WTC11 (cell line): ENCODE measurements at regions of chr1 and their contacts with region 1.

Region 1: GRCh38 chr1:201023517-201023902 is at the start of gene KIF21B:
- DNase-seq: peak; percentile 90
- ATAC-seq: peak; percentile 82
- H3K4me3 Mint-ChIP-seq: peak within 1 kb of the TSS; percentile 79
- H3K27ac Mint-ChIP-seq: no peak within 1 kb of the TSS
- H3K4me1 Mint-ChIP-seq: peaks cover 65% of the 10 kb centered on the region
- H3K27me3 Mint-ChIP-seq: peaks cover 7% of the 10 kb centered on the region
- CTCF ChIP-seq: no peak
- total RNA-seq, gene KIF21B: 17.8 to 19.4 TPM (median 18.0 TPM) in 3 replicates

Region 2: DNA sequence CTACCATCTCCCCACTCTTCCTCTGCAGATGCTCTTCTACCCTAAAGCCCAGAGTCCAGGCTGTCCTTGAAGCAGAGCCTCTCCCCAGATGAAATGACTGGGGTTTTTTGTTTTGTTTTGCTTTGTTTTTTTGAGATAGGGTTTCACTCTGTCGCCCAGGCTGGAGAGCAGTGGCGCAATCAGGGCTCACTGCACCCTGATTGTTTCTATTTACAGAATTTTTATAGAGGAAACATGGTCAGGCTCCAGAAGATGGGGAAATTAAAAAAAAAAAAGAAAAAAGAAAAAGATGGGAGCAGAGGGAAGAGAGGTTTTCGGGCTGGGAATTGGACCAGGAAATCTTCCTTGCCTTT is 570.0 kb before region 1 on chr1:
- CTCF ChIA-PET with region 1: no interaction called
- POLR2A ChIA-PET with region 1: no interaction called
- DNase-seq: no peak
- ATAC-seq: no peak
- H3K4me3 Mint-ChIP-seq: no peak overlapping the region
- H3K27ac Mint-ChIP-seq: peak overlapping the region; percentile 83; the same call in 1 of the 2 replicates
- H3K4me1 Mint-ChIP-seq: peaks cover 31% of the 10 kb centered on the region
- H3K27me3 Mint-ChIP-seq: no peaks in the 10 kb centered on the region
- CTCF ChIP-seq: no peak

Region 3: DNA sequence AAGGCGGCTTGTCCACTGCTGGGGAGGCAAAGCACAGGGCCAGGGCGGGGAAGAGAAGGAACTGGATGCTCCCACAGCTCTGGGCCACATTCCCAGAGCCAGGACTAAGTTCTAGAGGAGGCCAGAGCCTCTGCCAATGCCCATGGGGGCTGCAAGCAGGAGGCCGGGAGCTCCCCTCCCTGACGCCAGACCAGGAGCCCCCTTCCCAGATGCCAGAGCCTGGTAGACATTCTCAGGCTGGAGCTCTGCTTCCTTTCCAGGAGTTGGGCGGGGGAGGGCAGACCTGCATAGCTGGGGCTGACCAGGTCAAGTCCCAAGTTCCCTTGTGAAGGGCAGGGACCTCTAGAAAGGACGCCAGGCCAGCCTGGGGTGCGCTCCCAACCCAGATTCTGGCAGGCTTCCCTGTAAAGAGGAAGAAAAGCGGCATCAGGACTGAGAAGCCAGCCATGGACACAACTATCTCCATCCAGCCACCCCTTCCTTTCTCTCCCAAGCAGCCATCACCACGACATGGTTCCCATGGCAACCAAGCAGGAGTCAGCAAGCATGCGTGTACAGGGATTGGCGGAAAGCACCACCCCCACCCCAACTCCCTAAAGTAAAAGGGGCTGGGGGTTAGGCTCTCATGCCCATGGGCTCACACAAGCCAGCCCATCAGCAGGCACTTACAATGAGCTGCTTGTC is 13.4 kb before region 1 on chr1:
- CTCF ChIA-PET with region 1: interaction called, 54 read pairs
- POLR2A ChIA-PET with region 1: interaction called, 7 read pairs
- DNase-seq: peak; percentile 49
- ATAC-seq: peak; percentile 36
- H3K4me3 Mint-ChIP-seq: no peak overlapping the region
- H3K27ac Mint-ChIP-seq: no peak overlapping the region
- H3K4me1 Mint-ChIP-seq: peaks cover 16% of the 10 kb centered on the region
- H3K27me3 Mint-ChIP-seq: no peaks in the 10 kb centered on the region
- CTCF ChIP-seq: no peak

Region 4: DNA sequence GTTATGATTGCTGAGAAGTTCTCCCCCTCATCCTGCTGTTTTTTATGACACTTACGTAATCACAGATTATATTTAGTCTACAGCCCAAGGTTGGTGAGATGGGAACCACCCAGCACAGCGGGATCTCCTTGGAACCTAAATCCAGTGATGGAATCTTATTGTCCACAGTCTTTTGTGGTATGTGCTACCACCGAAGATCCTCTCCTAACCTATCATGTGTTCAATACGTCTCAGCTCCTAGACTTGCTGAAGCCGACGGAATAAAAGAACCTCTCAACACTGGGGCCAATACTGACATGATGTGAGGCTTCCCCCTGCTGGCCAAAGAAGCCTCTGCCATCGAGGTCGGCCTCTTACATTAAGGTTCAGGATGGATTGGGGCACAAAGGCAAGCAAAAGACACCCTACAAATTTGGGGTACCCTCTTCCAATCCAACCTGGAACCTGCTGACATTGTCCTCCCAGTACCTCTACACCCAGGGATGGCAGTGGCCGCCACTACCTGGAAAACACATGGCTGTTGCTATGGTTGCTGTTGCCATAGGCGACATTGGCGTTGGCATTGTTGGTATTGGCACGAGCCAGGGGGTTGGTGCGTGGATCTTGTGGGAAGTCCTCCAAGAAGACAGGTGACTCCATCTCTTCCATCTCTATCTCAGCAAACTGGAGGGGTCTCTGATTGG is 19.4 kb after region 1 on chr1:
- CTCF ChIA-PET with region 1: interaction called, 143 read pairs
- POLR2A ChIA-PET with region 1: interaction called, 5 read pairs
- DNase-seq: peak; percentile 70
- ATAC-seq: peak; percentile 87
- H3K4me3 Mint-ChIP-seq: no peak overlapping the region
- H3K27ac Mint-ChIP-seq: no peak overlapping the region
- H3K4me1 Mint-ChIP-seq: no peaks in the 10 kb centered on the region
- H3K27me3 Mint-ChIP-seq: no peaks in the 10 kb centered on the region; the same call in 1 of the 2 replicates
- CTCF ChIP-seq: peak; percentile 83

Region 5: GRCh38 chr1:201053158-201053860 is 29.8 kb after region 1 on chr1:
- CTCF ChIA-PET with region 1: interaction called, 10 read pairs
- POLR2A ChIA-PET with region 1: no interaction called
- DNase-seq: peak; percentile 45
- ATAC-seq: peak; percentile 75
- H3K4me3 Mint-ChIP-seq: no peak overlapping the region
- H3K27ac Mint-ChIP-seq: no peak overlapping the region
- H3K4me1 Mint-ChIP-seq: peaks cover 9% of the 10 kb centered on the region
- H3K27me3 Mint-ChIP-seq: no peaks in the 10 kb centered on the region
- CTCF ChIP-seq: no peak

Region 6: DNA sequence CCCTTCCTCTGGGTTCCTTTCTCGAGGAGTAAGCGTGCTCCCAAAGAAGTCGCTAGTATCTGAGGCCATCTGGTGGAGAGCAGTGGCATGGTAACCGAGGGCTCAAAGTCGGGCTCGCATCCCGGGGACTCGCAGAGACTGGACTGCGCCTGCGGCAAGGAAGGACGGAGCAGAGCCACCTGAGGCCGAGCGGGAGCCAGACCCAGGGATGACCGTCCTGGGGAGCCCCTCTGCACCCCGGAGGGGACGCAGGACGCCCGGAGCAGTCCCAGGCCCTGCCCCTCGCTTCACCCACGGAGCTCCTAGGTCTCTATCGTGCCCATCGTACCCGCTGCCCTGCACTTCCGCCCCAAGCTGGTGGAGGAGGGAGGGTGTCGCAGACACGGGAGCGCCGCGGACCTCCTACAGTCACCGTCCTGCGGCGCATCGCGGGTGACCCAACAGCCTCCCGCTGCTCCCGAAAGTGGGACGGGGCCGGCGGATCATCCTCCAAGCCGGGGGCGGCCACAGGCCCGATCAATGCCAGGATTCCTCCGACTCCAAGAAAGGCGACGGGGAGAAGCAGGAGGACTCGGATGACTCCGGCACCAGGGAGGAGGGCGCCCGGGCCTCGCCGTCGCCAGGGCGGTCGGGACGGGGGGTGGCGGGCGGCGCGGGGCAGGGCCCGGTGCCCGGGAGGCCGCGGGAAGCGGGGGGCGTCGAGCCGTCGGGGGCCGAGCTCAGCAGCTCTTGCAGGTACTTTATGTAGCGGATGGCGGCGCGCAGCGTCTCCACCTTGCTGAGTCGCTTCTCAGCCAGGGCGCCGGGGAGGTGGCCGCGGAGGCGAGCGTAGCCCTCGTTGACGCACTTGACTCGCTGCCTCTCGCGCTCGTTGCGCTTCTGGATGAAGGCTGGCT is 91.0 kb after region 1 on chr1:
- CTCF ChIA-PET with region 1: interaction called, 61 read pairs
- POLR2A ChIA-PET with region 1: no interaction called
- DNase-seq: peak; percentile 95
- ATAC-seq: peak; percentile 92
- H3K4me3 Mint-ChIP-seq: peak overlapping the region; percentile 73
- H3K27ac Mint-ChIP-seq: no peak overlapping the region
- H3K4me1 Mint-ChIP-seq: peaks cover 8% of the 10 kb centered on the region
- H3K27me3 Mint-ChIP-seq: peaks cover 62% of the 10 kb centered on the region
- CTCF ChIP-seq: peak; percentile 65